CD4-positive, alpha-beta memory T cell (primary cell): ENCODE measurements at regions of chr3 and their contacts with region 1.

Region 1: DNA sequence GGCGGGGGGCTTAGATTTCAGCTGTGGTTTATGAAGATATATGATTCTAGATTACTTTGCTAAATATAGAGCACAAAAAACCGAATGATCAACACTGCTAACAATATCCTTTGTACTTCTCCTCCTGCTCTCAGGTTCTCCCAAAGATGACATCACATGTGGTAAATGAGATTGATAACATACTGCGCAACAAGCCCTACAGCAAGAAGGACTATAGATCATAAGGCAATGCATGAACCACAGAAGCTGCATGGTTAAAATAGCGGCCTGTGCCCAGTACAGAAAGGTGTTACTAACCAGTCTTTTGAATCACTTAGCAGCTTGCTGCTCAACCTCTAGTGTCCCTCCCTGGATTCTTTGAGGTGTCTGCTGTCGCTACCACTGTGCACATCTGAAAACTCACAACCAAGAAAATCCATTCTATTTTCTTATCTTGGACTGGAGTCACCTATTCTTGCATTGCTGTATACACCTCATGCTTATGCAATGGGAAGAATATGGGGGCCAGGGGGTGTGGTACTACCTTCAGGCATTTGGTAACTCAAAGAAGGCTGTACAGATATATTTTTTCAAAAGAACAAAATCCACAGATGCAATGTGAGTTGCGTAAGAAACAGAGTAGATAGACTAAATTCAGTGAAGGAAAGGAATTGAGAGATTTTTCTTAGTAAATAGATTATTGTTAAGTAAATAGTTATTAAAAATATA is 18.2 kb downstream of the SSR3 start:
- DNase-seq: no peak
- H3K4me3 ChIP-seq: no peak overlapping the region
- H3K4me3 Mint-ChIP-seq: no peak overlapping the region
- H3K27ac ChIP-seq: no peak overlapping the region
- H3K27ac Mint-ChIP-seq: no peak overlapping the region
- H3K4me1 ChIP-seq: no peaks in the 10 kb centered on the region
- H3K4me1 Mint-ChIP-seq: peaks cover 0 to 2% (median 0%) of the 10 kb centered on the region in 4 donors
- H3K27me3 ChIP-seq: no peaks in the 10 kb centered on the region
- H3K27me3 Mint-ChIP-seq: no peaks in the 10 kb centered on the region

Region 2: DNA sequence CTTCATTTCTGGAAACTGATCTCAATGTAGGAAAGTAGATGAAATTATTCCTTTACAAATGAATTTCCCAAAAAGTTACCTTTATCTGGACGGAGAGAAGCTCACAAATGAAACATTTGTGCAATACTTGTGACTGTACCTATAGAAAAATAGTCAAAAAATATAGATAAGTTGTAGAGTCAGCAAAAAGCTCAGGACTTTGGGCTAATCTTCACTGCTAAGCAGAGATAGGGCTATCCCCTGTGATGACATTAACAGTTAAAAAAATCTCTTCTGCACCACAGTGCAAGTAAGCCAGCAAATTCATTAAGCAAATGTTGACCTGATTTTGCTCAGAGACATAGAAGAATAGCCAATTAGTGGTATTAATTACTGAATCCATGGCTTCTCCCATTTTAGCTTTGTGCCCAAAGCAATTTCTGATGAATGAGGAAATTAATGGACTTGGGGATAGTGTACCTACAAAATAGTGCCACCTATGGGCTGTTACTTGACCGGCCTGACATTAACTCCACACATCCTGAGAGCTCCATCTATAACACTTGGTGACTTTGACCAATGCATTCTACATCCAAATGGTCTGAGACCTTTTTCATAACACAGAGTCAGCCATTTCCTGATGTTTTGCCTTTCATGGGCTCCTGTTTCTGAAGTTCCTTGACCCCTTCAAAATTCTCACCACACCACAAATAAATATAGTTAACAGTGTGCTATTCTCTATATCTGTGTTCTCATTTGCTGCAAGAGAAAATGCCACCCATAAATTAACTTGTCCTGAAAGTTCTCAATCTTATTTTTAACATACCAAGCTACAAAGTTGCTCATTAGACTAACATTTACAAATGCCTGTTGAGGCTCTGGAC is 86.7 kb before region 1 on chr3:
- CTCF ChIA-PET with region 1: interaction called, 5 read pairs
- POLR2A ChIA-PET with region 1: no interaction called
- intact Hi-C with region 1: loop called (anchors 1 kb)
- DNase-seq: peak in 1 of 5 donors; percentile 10
- H3K4me3 ChIP-seq: no peak overlapping the region
- H3K4me3 Mint-ChIP-seq: no peak overlapping the region
- H3K27ac ChIP-seq: no peak overlapping the region
- H3K27ac Mint-ChIP-seq: no peak overlapping the region
- H3K4me1 ChIP-seq: no peaks in the 10 kb centered on the region
- H3K4me1 Mint-ChIP-seq: no peaks in the 10 kb centered on the region
- H3K27me3 ChIP-seq: no peaks in the 10 kb centered on the region
- H3K27me3 Mint-ChIP-seq: peaks cover 2 to 4% of the 10 kb centered on the region in 2 donors

Region 3: GRCh38 chr3:156474560-156475389 is 61.9 kb before region 1 on chr3:
- CTCF ChIA-PET with region 1: interaction called, 4 read pairs
- POLR2A ChIA-PET with region 1: no interaction called
- intact Hi-C with region 1: loop called (anchors 1 kb)
- DNase-seq: no peak
- H3K4me3 ChIP-seq: no peak overlapping the region
- H3K4me3 Mint-ChIP-seq: peak overlapping the region in 2 of 8 donors; percentile 31 to 36
- H3K27ac ChIP-seq: no peak overlapping the region
- H3K27ac Mint-ChIP-seq: no peak overlapping the region
- H3K4me1 ChIP-seq: no peaks in the 10 kb centered on the region
- H3K4me1 Mint-ChIP-seq: peaks cover 0 to 1% (median 0%) of the 10 kb centered on the region in 4 donors
- H3K27me3 ChIP-seq: no peaks in the 10 kb centered on the region
- H3K27me3 Mint-ChIP-seq: peaks cover 4 to 8% of the 10 kb centered on the region in 2 donors

Region 4: GRCh38 chr3:156525808-156526207 is 10.9 kb before region 1 on chr3:
- CTCF ChIA-PET with region 1: interaction called, 28 read pairs
- POLR2A ChIA-PET with region 1: interaction called, 3 read pairs
- intact Hi-C with region 1: loop called (anchors 2 kb)
- DNase-seq: no peak
- H3K4me3 ChIP-seq: no peak overlapping the region
- H3K4me3 Mint-ChIP-seq: peak overlapping the region in 1 of 8 donors; percentile 24
- H3K27ac ChIP-seq: no peak overlapping the region
- H3K27ac Mint-ChIP-seq: no peak overlapping the region
- H3K4me1 ChIP-seq: peaks cover 6% of the 10 kb centered on the region
- H3K4me1 Mint-ChIP-seq: peaks cover 12 to 17% (median 14%) of the 10 kb centered on the region in 4 donors
- H3K27me3 ChIP-seq: no peaks in the 10 kb centered on the region
- H3K27me3 Mint-ChIP-seq: peaks cover 7 to 8% of the 10 kb centered on the region in 2 donors